ENCODE measurements at regions of chr16 and their contacts with region 1.

Region 1: DNA sequence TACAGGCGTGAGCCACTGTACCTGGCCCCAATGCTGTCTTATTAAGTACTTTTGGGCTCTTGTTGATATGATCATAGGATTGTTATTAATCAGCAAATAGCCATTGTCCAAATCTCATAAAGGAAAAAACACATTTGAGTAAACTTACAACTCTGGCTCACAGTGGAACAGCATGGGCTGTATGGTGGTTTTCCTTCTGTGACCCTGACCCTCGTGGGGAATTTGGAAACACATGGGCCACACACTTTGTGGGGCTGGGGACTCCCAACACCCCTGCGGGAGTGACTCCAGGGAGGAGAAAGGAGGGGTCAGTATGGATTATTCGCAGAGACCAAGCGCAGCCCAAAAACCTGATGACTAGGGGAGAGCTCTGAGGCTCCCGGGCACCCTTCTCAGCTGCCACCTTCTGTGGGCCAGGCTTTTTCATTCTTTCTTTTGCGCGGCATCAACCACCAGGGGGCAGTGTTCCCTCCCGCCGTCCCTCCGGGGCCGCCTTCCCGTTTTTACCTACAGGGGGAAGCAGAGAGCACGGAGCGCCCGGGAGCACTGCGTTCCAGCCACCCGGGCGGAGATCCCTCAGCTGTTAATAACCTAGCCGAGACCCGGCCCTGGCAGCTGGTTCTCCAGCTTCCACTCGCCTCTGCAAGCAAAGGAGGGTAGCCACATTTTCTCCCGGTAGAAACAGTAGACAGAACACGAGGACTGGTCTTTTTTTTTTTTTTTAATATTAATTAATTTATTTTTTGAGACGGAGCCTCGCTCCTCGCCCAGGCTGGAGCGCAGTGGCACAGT is 9.7 kb downstream of the TSNAXIP1 start:
- DNase-seq: peak; percentile 87
- ATAC-seq: peak; percentile 93
- H3K4me3 Mint-ChIP-seq: no peak overlapping the region
- H3K27ac Mint-ChIP-seq: no peak overlapping the region
- H3K4me1 Mint-ChIP-seq: no peaks in the 10 kb centered on the region
- H3K27me3 Mint-ChIP-seq: no peaks in the 10 kb centered on the region
- CTCF ChIP-seq: peak; percentile 100

Region 2: GRCh38 chr16:67521095-67521804 is 295.2 kb before region 1 on chr16:
- CTCF ChIA-PET with region 1: interaction called, 19 read pairs
- POLR2A ChIA-PET with region 1: no interaction called
- DNase-seq: peak; percentile 99
- ATAC-seq: peak; percentile 88
- H3K4me3 Mint-ChIP-seq: peak overlapping the region; percentile 84
- H3K27ac Mint-ChIP-seq: peak overlapping the region; percentile 95
- H3K4me1 Mint-ChIP-seq: no peaks in the 10 kb centered on the region
- H3K27me3 Mint-ChIP-seq: peaks cover 88% of the 10 kb centered on the region
- CTCF ChIP-seq: peak; percentile 72

Region 3: GRCh38 chr16:67632415-67633172 is 183.8 kb before region 1 on chr16:
- CTCF ChIA-PET with region 1: no interaction called
- POLR2A ChIA-PET with region 1: no interaction called
- DNase-seq: no peak
- ATAC-seq: no peak
- H3K4me3 Mint-ChIP-seq: no peak overlapping the region
- H3K27ac Mint-ChIP-seq: peak overlapping the region; percentile 17; the same call in 1 of the 2 replicates
- H3K4me1 Mint-ChIP-seq: no peaks in the 10 kb centered on the region
- H3K27me3 Mint-ChIP-seq: no peaks in the 10 kb centered on the region; the same call in 1 of the 2 replicates
- CTCF ChIP-seq: no peak

Region 4: GRCh38 chr16:67719048-67719777 is 97.2 kb before region 1 on chr16 and contains the start of gene GFOD2:
- CTCF ChIA-PET with region 1: interaction called, 18 read pairs
- POLR2A ChIA-PET with region 1: interaction called, 7 read pairs
- DNase-seq: peak; percentile 99
- ATAC-seq: peak; percentile 94
- H3K4me3 Mint-ChIP-seq: peak within 1 kb of the TSS; percentile 91
- H3K27ac Mint-ChIP-seq: peak within 1 kb of the TSS; percentile 82
- H3K4me1 Mint-ChIP-seq: peaks cover 21% of the 10 kb centered on the region
- H3K27me3 Mint-ChIP-seq: no peaks in the 10 kb centered on the region
- CTCF ChIP-seq: no peak
- total RNA-seq, gene GFOD2: 19.3 to 29.5 TPM (median 22.8 TPM) in 3 replicates

Region 5: GRCh38 chr16:67786491-67786890 is 29.9 kb before region 1 on chr16:
- CTCF ChIA-PET with region 1: interaction called, 10 read pairs
- POLR2A ChIA-PET with region 1: no interaction called
- DNase-seq: no peak
- ATAC-seq: no peak
- H3K4me3 Mint-ChIP-seq: no peak overlapping the region
- H3K27ac Mint-ChIP-seq: no peak overlapping the region
- H3K4me1 Mint-ChIP-seq: no peaks in the 10 kb centered on the region
- H3K27me3 Mint-ChIP-seq: no peaks in the 10 kb centered on the region
- CTCF ChIP-seq: no peak

Region 6: GRCh38 chr16:67847064-67847861 is 30.8 kb after region 1 on chr16 and contains the start of gene CENPT:
- CTCF ChIA-PET with region 1: interaction called, 58 read pairs
- POLR2A ChIA-PET with region 1: interaction called, 5 read pairs
- DNase-seq: no peak
- ATAC-seq: peak; percentile 4
- H3K4me3 Mint-ChIP-seq: peak within 1 kb of the TSS; percentile 92
- H3K27ac Mint-ChIP-seq: peak within 1 kb of the TSS; percentile 93
- H3K4me1 Mint-ChIP-seq: peaks cover 43% of the 10 kb centered on the region
- H3K27me3 Mint-ChIP-seq: no peaks in the 10 kb centered on the region
- CTCF ChIP-seq: no peak
- total RNA-seq, gene CENPT: 52.1 to 58.3 TPM (median 57.3 TPM) in 3 replicates

Region 7: GRCh38 chr16:67883872-67884261 is 67.4 kb after region 1 on chr16:
- CTCF ChIA-PET with region 1: interaction called, 32 read pairs
- POLR2A ChIA-PET with region 1: no interaction called
- DNase-seq: peak; percentile 88
- ATAC-seq: peak; percentile 60
- H3K4me3 Mint-ChIP-seq: no peak overlapping the region
- H3K27ac Mint-ChIP-seq: no peak overlapping the region
- H3K4me1 Mint-ChIP-seq: peaks cover 23% of the 10 kb centered on the region
- H3K27me3 Mint-ChIP-seq: no peaks in the 10 kb centered on the region
- CTCF ChIP-seq: peak; percentile 90

Region 8: DNA sequence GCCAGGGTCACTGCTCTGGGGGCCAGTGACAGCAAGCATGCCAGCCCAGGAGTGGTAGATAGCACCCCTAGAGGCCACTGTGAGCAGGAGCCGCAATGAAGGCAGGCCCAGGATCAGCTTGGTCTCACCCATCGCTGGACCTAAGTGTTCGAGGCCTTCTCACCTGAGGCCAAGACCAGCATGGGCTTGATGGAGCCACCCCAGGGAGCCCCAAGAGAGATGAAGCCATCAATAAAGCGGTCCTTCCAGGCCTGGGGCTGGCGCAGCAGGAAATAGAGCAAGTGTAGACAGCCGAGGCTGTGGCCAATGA is 125.7 kb after region 1 on chr16:
- CTCF ChIA-PET with region 1: interaction called, 16 read pairs
- POLR2A ChIA-PET with region 1: interaction called, 5 read pairs
- DNase-seq: peak; percentile 78
- ATAC-seq: peak; percentile 83
- H3K4me3 Mint-ChIP-seq: no peak overlapping the region
- H3K27ac Mint-ChIP-seq: no peak overlapping the region
- H3K4me1 Mint-ChIP-seq: peaks cover 7% of the 10 kb centered on the region
- H3K27me3 Mint-ChIP-seq: no peaks in the 10 kb centered on the region
- CTCF ChIP-seq: peak; percentile 63

Region 9: GRCh38 chr16:68275611-68276191 is 459.3 kb after region 1 on chr16:
- CTCF ChIA-PET with region 1: no interaction called
- POLR2A ChIA-PET with region 1: no interaction called
- DNase-seq: no peak
- ATAC-seq: no peak
- H3K4me3 Mint-ChIP-seq: no peak overlapping the region
- H3K27ac Mint-ChIP-seq: peak overlapping the region; percentile 91
- H3K4me1 Mint-ChIP-seq: peaks cover 3% of the 10 kb centered on the region; the same call in 1 of the 2 replicates
- H3K27me3 Mint-ChIP-seq: no peaks in the 10 kb centered on the region
- CTCF ChIP-seq: no peak